ENCODE measurements at regions of chr12 and their contacts with region 1.

Region 1: GRCh38 chr12:104381731-104382480 is 74.8 kb upstream of the CHST11 start:
- DNase-seq: peak; percentile 86
- H3K4me3 Mint-ChIP-seq: no peak overlapping the region
- H3K27ac Mint-ChIP-seq: peak overlapping the region; percentile 66
- H3K4me1 Mint-ChIP-seq: peaks cover 13% of the 10 kb centered on the region
- H3K27me3 Mint-ChIP-seq: peaks cover 7% of the 10 kb centered on the region

Region 2: DNA sequence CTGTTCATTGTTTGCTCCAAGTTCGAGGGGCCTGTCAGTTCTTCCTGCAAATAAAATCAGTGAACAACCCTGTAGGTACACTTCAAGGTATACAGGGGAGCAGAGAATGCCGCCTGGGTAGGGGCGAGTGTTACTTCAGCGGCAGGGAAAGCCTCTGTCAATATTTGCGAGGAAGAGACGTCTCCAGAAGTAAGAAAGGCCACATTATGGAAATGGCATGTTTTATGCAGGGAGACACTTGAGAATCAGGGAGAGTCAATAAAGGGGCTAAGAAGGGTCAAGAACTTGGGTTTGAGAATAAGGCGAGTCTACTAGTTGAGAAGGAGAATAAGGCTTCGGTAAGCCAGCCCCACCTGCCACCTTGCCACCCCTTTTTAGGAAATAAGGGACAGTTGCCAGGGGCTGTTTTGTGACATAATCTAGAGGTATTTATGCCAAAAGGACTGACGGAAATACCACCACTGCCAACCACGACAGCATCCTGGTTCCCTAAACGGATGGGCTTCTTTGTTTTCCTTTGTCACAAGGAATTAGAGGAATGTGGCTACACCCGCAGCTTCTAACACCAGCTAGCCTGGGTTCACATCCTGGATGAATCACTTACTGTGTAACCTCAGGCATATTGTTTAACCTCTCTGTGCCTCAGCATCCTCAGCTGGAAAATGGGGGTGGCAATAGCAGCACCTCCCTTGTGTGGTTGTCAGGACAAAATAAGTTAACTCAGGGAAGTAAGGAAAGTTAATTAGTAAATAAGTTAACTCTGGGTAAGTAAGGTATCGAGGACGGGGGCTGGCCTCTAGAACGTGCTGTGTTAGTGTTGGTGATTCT is 10.6 kb before region 1 on chr12:
- CTCF ChIA-PET with region 1: interaction called, 27 read pairs
- POLR2A ChIA-PET with region 1: no interaction called
- DNase-seq: no peak
- H3K4me3 Mint-ChIP-seq: no peak overlapping the region
- H3K27ac Mint-ChIP-seq: no peak overlapping the region
- H3K4me1 Mint-ChIP-seq: peaks cover 16% of the 10 kb centered on the region
- H3K27me3 Mint-ChIP-seq: no peaks in the 10 kb centered on the region

Region 3: GRCh38 chr12:104446646-104447421 is 64.9 kb after region 1 on chr12:
- CTCF ChIA-PET with region 1: no interaction called
- POLR2A ChIA-PET with region 1: no interaction called
- DNase-seq: no peak
- H3K4me3 Mint-ChIP-seq: no peak overlapping the region
- H3K27ac Mint-ChIP-seq: no peak overlapping the region
- H3K4me1 Mint-ChIP-seq: no peaks in the 10 kb centered on the region
- H3K27me3 Mint-ChIP-seq: no peaks in the 10 kb centered on the region

Region 4: DNA sequence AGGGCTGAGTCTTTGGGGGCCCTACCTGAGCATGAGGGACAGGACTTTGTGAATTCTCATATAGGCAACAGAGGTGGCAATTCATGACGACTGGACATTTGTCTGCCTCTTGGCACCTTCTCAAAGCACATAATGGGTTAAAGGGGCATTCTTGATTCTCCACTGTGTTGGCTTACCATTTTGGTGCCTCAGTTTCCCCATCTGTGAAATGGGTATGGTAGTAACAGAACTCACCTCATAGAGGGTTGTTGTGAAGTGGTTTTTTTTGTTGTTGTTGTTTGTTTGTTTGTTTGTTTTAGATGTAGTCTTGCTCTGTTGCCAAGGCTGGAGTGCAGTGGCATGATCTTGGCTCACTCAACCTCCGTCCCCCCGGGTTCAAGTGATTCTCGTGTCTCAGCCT is 180.9 kb after region 1 on chr12:
- CTCF ChIA-PET with region 1: no interaction called
- POLR2A ChIA-PET with region 1: no interaction called
- DNase-seq: no peak
- H3K4me3 Mint-ChIP-seq: no peak overlapping the region
- H3K27ac Mint-ChIP-seq: no peak overlapping the region
- H3K4me1 Mint-ChIP-seq: peaks cover 21% of the 10 kb centered on the region
- H3K27me3 Mint-ChIP-seq: no peaks in the 10 kb centered on the region

Region 5: DNA sequence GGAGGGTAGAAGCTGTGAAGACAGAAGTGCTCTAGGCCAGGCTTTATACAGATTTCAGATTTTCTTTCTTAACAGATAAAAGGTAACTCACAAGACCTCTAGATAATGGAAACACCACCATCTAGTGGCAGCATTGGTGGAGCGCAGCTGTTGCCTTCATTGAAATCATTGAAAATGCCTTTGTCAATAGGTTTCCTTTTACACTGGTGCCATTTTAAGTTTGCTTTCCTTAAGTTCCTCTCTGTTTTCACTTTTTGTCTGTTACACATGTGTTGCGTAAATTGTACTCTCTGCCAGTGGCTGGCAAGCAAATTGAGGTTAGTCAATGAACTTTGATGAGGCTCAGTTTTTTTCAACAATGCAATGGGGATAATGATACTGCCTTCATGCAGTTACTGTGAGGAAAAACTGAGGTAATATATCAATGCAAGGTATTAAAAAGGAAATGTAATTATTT is 671.2 kb after region 1 on chr12:
- CTCF ChIA-PET with region 1: interaction called, 19 read pairs
- POLR2A ChIA-PET with region 1: no interaction called
- DNase-seq: peak; percentile 84
- H3K4me3 Mint-ChIP-seq: no peak overlapping the region
- H3K27ac Mint-ChIP-seq: no peak overlapping the region
- H3K4me1 Mint-ChIP-seq: peaks cover 1% of the 10 kb centered on the region
- H3K27me3 Mint-ChIP-seq: peaks cover 13% of the 10 kb centered on the region

Measured in activated CD4-positive, alpha-beta T cell treated with anti-CD3 and anti-CD28 coated beads, Interleukin-2, amount 10 ng/mL, durations not matched to agents 7 days and 5 days (primary cell).